MCF 10A (cell line): ENCODE measurements at regions of chr12 and their contacts with region 1.

Region 1: DNA sequence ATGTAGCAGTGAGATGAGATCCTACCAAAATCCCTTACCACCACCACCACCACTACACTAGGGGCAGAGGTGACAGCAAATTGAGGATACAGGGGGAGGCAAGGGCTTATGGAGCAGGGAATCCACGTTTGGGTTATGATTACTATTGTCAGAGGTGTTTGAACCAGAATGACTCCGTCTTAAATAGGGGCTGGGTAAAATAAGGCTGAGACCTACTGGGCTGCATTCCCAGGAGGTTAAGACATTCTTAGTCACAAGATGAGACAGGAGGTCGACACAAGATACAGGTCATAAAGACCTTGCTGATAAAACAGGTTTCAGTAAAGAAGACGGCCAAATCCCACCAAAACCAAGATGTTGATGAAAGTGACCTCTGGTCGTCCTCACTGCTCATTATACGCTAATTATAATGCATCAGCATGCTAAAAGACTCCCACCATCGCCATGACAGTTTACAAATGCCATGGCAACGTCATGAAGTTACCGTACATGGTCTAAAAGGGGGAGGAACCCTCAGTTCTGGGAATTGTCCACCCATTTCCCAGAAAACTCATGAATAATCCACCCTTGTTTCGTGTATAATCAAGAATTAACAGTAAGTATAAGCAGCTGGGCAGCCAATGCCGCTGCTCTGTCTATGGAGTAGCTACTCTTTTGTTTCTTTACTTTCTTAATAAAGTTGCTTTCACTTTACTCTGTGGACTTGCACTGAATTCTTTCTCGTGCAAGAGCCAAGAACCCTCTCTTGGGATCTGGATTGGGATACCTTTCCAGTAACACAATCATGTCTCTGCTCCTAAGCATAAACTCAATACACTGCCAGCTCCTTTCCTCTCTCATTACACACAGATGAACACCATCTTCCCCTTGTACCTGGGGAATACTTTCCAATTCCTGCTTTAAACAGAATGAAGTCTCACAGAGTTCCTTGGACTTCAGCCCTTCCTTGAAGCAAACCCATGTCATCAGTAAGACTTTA is 16.7 kb upstream of the CRY1 start:
- DNase-seq: no peak
- H3K4me3 Mint-ChIP-seq: no peak overlapping the region
- H3K27ac Mint-ChIP-seq: no peak overlapping the region
- H3K4me1 Mint-ChIP-seq: no peaks in the 10 kb centered on the region
- H3K27me3 Mint-ChIP-seq: peaks cover 39% of the 10 kb centered on the region
- CTCF ChIP-seq: no peak

Region 2: GRCh38 chr12:106386813-106387535 is 723.1 kb before region 1 on chr12:
- CTCF ChIA-PET with region 1: interaction called, 11 read pairs
- POLR2A ChIA-PET with region 1: no interaction called
- intact Hi-C with region 1: no loop called
- DNase-seq: no peak
- H3K4me3 Mint-ChIP-seq: no peak overlapping the region
- H3K27ac Mint-ChIP-seq: no peak overlapping the region
- H3K4me1 Mint-ChIP-seq: no peaks in the 10 kb centered on the region
- H3K27me3 Mint-ChIP-seq: no peaks in the 10 kb centered on the region
- CTCF ChIP-seq: no peak

Region 3: GRCh38 chr12:106729611-106730010 is 380.4 kb before region 1 on chr12:
- CTCF ChIA-PET with region 1: no interaction called
- POLR2A ChIA-PET with region 1: no interaction called
- intact Hi-C with region 1: no loop called
- DNase-seq: no peak
- H3K4me3 Mint-ChIP-seq: no peak overlapping the region
- H3K27ac Mint-ChIP-seq: no peak overlapping the region
- H3K4me1 Mint-ChIP-seq: no peaks in the 10 kb centered on the region
- H3K27me3 Mint-ChIP-seq: no peaks in the 10 kb centered on the region
- CTCF ChIP-seq: no peak

Region 4: DNA sequence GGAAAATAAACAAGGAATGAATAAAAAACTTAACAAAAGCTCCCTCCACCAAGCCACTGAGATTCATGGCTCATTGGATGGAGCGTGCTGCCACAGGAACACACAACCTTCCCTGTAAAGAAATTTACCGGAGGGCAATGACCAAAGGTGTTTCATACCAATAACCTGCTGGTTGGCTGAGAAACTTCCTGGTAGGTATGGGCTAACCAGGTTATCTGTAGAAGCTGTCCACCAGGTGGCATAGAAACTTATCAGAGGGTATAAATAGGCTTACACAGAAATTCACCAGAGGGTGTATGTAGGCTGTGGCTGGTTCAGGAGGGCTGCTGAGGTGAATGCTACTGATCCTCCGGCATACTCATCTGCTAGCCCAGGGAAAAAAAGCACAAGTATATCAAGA is 96.0 kb before region 1 on chr12:
- CTCF ChIA-PET with region 1: interaction called, 11 read pairs
- POLR2A ChIA-PET with region 1: no interaction called
- intact Hi-C with region 1: no loop called
- DNase-seq: peak; percentile 50
- H3K4me3 Mint-ChIP-seq: no peak overlapping the region
- H3K27ac Mint-ChIP-seq: no peak overlapping the region
- H3K4me1 Mint-ChIP-seq: no peaks in the 10 kb centered on the region
- H3K27me3 Mint-ChIP-seq: no peaks in the 10 kb centered on the region
- CTCF ChIP-seq: peak; percentile 21

Region 5: DNA sequence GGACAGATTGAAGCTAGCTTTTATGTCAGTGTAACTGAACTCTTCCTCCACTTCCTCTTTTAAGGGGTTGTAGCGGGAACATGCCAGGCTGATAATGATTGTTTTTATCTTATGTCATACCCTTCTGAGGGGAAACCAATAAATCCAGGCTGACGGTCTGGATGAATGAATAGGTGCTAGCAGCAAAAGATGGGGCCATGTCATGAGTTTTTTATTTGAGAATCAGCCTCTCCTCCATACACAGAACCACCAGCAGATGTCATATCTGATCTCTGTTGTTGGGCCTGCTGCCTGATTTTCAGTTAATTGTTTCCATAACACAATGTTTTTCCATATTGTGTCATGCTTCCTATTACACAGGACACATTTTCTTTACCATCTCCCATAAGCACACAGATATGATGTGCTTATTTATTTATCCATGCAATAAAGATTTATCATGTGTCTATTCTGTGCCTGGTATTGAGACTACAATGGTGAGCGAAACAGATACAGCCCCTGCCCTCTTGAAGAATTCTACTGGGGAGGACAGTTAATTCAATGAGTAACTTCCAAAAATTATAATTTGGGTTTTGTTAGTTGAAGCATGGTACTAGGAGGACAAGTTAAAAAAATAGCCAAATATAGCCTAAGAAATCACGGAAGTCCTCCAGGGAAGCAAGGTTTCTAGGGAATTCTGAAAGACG is 16.9 kb after region 1 on chr12:
- CTCF ChIA-PET with region 1: interaction called, 59 read pairs
- POLR2A ChIA-PET with region 1: interaction called, 3 read pairs
- intact Hi-C with region 1: no loop called
- DNase-seq: peak; percentile 28
- H3K4me3 Mint-ChIP-seq: no peak overlapping the region
- H3K27ac Mint-ChIP-seq: no peak overlapping the region
- H3K4me1 Mint-ChIP-seq: no peaks in the 10 kb centered on the region
- H3K27me3 Mint-ChIP-seq: peaks cover 11% of the 10 kb centered on the region
- CTCF ChIP-seq: peak; percentile 31